Naive thymus-derived CD4-positive, alpha-beta T cell (primary cell): ENCODE measurements at regions of chr17 and their contacts with region 1.

Region 1: DNA sequence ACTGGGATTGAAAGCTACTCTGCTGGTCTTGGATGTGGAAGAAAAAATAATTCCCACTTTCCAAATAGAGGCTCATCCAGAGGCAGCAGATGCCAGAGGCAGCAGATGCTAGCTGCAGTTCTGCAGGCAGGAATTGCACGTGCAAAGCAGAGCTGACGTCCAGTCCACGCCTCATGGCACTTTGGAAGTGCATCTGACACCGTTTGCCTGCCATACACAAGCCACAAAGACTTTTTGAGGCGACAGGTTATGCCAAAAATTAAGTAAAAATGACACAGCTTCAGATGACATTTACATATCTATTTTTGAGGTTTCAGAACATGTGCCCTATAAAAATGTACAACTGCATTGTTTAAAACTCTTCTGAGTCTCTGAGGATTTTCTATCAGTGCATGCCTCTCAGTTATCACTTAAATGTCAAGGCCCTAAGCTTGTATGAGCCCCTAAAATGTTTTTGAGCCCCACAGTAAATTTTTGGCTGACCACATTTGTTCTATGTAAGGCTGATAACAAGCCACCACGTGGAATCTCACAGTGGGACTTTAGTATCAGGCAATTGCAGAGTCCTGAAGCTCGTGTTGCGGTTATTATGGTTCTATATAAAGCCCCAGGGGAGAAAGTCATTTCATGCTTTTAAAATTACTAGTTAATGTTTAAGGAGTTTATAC is 239.2 kb downstream of the PRKCA start:
- DNase-seq: no peak
- ATAC-seq: no peak
- H3K4me3 ChIP-seq: no peak overlapping the region
- H3K4me3 Mint-ChIP-seq: peak overlapping the region in 6 of 10 donors; percentile 2 to 63 (median 28)
- H3K27ac ChIP-seq: no peak overlapping the region
- H3K27ac Mint-ChIP-seq: peak overlapping the region in 2 of 9 donors; percentile 52 to 63
- H3K4me1 ChIP-seq: peaks cover 19 to 27% of the 10 kb centered on the region in 2 donors
- H3K4me1 Mint-ChIP-seq: peaks cover 41 to 88% (median 80%) of the 10 kb centered on the region in 7 donors
- H3K27me3 ChIP-seq: no peaks in the 10 kb centered on the region
- H3K27me3 Mint-ChIP-seq: no peaks in the 10 kb centered on the region

Region 2: GRCh38 chr17:66455060-66455459 is 86.5 kb before region 1 on chr17:
- CTCF ChIA-PET with region 1: no interaction called
- POLR2A ChIA-PET with region 1: no interaction called
- intact Hi-C with region 1: no loop called
- DNase-seq: no peak
- ATAC-seq: no peak
- H3K4me3 ChIP-seq: no peak overlapping the region
- H3K4me3 Mint-ChIP-seq: no peak overlapping the region
- H3K27ac ChIP-seq: no peak overlapping the region
- H3K27ac Mint-ChIP-seq: peak overlapping the region in 1 of 9 donors; percentile 69
- H3K4me1 ChIP-seq: peaks cover 0 to 13% of the 10 kb centered on the region in 2 donors
- H3K4me1 Mint-ChIP-seq: peaks cover 29 to 87% (median 59%) of the 10 kb centered on the region in 7 donors
- H3K27me3 ChIP-seq: no peaks in the 10 kb centered on the region
- H3K27me3 Mint-ChIP-seq: no peaks in the 10 kb centered on the region

Region 3: GRCh38 chr17:66493991-66494803 is 47.4 kb before region 1 on chr17:
- CTCF ChIA-PET with region 1: no interaction called
- POLR2A ChIA-PET with region 1: no interaction called
- intact Hi-C with region 1: loop called in 1 of 2 experiments (anchors 5 kb)
- DNase-seq: peak in 2 of 9 donors; percentile 7 to 11
- ATAC-seq: peak; percentile 37
- H3K4me3 ChIP-seq: no peak overlapping the region
- H3K4me3 Mint-ChIP-seq: peak overlapping the region in 8 of 10 donors; percentile 4 to 54 (median 34)
- H3K27ac ChIP-seq: no peak overlapping the region
- H3K27ac Mint-ChIP-seq: peak overlapping the region; percentile 5 to 89 (median 67)
- H3K4me1 ChIP-seq: peaks cover 0 to 40% of the 10 kb centered on the region in 2 donors
- H3K4me1 Mint-ChIP-seq: peaks cover 38 to 90% (median 74%) of the 10 kb centered on the region in 7 donors
- H3K27me3 ChIP-seq: no peaks in the 10 kb centered on the region
- H3K27me3 Mint-ChIP-seq: no peaks in the 10 kb centered on the region

Region 4: GRCh38 chr17:66508896-66509843 is 32.4 kb before region 1 on chr17:
- CTCF ChIA-PET with region 1: no interaction called
- POLR2A ChIA-PET with region 1: no interaction called
- intact Hi-C with region 1: loop called in 1 of 2 experiments (anchors 5 kb)
- DNase-seq: peak in 1 of 9 donors; percentile 54
- ATAC-seq: no peak
- H3K4me3 ChIP-seq: no peak overlapping the region
- H3K4me3 Mint-ChIP-seq: peak overlapping the region in 8 of 10 donors; percentile 1 to 52 (median 22)
- H3K27ac ChIP-seq: no peak overlapping the region
- H3K27ac Mint-ChIP-seq: peak overlapping the region; percentile 7 to 97 (median 62)
- H3K4me1 ChIP-seq: peaks cover 6 to 26% of the 10 kb centered on the region in 2 donors
- H3K4me1 Mint-ChIP-seq: peaks cover 32 to 88% (median 76%) of the 10 kb centered on the region in 7 donors
- H3K27me3 ChIP-seq: no peaks in the 10 kb centered on the region
- H3K27me3 Mint-ChIP-seq: no peaks in the 10 kb centered on the region